HCT116 (cell line): ENCODE measurements at regions of chr5 and their contacts with region 1.

Region 1: DNA sequence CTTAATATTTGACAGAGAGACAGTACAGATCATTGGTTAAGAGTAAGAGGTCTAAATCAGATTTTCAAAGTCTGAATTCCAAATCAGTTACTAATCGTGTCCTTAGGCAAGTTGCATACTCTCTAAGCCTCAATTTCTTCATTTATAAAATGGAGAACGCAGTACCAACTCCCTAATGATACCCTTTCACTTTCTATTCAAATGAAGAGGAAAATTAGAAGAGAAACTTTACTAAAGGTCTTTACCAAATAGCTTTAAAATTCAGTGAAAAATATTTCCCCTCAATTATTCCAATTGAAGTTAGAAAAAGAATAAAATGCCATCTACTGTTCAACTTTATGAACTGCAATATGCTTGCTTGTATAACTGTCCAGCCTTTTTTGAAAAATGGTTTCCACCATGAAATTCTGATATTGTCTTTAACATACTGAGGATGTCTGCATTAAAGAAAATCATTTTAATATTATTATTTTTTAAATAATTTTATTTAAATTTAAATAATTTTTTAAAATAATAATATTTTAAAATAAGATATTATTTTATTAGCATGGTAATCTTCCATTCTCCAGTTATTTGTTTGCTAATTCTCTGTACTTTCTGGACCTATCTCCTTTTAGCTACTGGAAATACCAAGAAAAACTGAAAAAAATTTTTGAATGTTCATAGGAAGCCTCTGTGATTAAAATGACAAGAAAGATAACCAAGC is 36.0 kb downstream of the POC5 start:
- DNase-seq: peak; percentile 15
- ATAC-seq: peak; percentile 40; the same call in 1 of the 2 replicates
- H3K4me3 ChIP-seq: no peak overlapping the region
- H3K27ac ChIP-seq: no peak overlapping the region
- H3K4me1 ChIP-seq: no peaks in the 10 kb centered on the region; a peak in 1 of 4 replicates
- H3K27me3 ChIP-seq: no peaks in the 10 kb centered on the region
- CTCF ChIP-seq: peak; percentile 36 to 64 (median 46); a peak in 5 of 6 replicates
- POLR2A ChIP-seq: no peak
- RAD21 ChIP-seq: peak; percentile 62

Region 2: DNA sequence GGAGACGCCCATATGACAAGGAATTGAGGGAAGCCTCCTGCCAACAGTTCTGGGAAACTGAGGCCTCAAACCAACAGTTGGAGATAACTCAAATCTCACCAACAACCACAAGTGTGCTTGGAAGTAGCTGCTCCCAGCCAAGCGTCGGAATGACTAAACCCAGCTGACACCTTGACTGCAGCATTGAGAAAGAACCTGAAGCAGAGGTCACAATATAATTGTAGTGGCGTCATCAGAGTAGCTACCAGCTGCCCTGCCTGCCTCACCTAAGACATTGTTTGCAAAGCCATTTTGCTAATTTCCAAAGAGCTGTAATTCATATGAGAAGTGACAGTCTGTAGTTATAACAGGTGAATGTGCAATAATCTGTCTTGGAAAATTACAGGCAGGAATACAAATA is 403.8 kb before region 1 on chr5:
- CTCF ChIA-PET with region 1: no interaction called
- POLR2A ChIA-PET with region 1: no interaction called
- RAD21 ChIA-PET with region 1: no interaction called
- intact Hi-C with region 1: loop called (anchors 5 kb)
- DNase-seq: peak; percentile 21
- ATAC-seq: peak; percentile 46
- H3K4me3 ChIP-seq: no peak overlapping the region
- H3K27ac ChIP-seq: no peak overlapping the region
- H3K4me1 ChIP-seq: peaks cover 5 to 40% of the 10 kb centered on the region in 2 experiments; a peak in 3 of 4 replicates
- H3K27me3 ChIP-seq: no peaks in the 10 kb centered on the region
- CTCF ChIP-seq: no peak
- POLR2A ChIP-seq: no peak
- RAD21 ChIP-seq: no peak

Region 3: GRCh38 chr5:75373862-75374261 is 307.4 kb before region 1 on chr5:
- CTCF ChIA-PET with region 1: no interaction called
- POLR2A ChIA-PET with region 1: no interaction called
- RAD21 ChIA-PET with region 1: no interaction called
- intact Hi-C with region 1: loop called (anchors 10 kb)
- DNase-seq: no peak
- ATAC-seq: no peak
- H3K4me3 ChIP-seq: no peak overlapping the region
- H3K27ac ChIP-seq: no peak overlapping the region
- H3K4me1 ChIP-seq: no peaks in the 10 kb centered on the region
- H3K27me3 ChIP-seq: no peaks in the 10 kb centered on the region
- CTCF ChIP-seq: no peak
- POLR2A ChIP-seq: no peak
- RAD21 ChIP-seq: no peak

Region 4: DNA sequence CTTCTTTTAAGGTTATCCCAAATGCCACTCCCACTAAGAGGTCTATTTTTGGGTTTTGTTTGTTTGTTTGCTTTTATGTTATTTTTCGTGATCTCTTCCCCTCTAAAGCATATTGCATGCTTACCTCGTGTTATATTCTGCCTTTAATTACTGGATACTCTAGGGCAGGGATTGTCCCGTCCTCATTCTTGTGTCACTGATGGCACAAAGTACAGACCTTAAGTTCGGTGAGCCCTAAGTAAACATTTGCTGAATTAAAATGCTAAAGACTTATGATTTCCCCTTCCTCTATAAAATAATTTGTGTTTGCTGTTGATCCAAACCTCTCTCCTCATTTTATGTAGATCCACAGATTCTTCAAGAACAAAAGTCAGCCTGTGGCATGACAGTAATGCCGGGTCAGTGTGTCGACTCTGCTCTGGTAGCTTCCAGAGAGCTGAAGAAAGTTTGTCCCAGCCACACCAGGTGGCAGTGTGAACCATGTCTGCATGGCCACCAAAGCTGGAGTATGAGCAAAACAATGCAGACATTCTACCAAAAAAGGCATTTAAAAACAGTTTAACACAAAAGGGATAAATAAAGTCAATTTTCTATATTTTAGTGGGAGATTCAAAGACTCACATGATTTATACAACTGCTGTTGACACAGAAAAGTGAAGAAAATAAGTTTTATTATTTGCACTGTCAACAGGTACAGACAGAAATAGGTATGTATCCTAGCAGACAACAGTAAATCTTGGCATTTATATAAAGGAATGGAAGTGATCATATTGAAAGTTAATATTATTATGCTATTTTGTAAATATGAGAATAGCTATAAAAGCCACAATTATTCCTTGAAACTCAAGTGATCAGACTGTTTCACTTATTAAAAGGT is 53.9 kb after region 1 on chr5:
- CTCF ChIA-PET with region 1: no interaction called
- POLR2A ChIA-PET with region 1: no interaction called
- RAD21 ChIA-PET with region 1: no interaction called
- intact Hi-C with region 1: no loop called
- DNase-seq: peak; percentile 3
- ATAC-seq: peak; percentile 87
- H3K4me3 ChIP-seq: no peak overlapping the region
- H3K27ac ChIP-seq: no peak overlapping the region
- H3K4me1 ChIP-seq: no peaks in the 10 kb centered on the region
- H3K27me3 ChIP-seq: no peaks in the 10 kb centered on the region
- CTCF ChIP-seq: peak; percentile 26 to 67 (median 51); a peak in 5 of 6 replicates
- POLR2A ChIP-seq: no peak
- RAD21 ChIP-seq: peak; percentile 62